Cardiac septum (tissue), 1 donor: ENCODE measurements at regions of chr12 and their contacts with region 1.

Region 1: GRCh38 chr12:54858562-54858961 is 4.2 kb downstream of the MUCL1 start:
- DNase-seq: no peak

Region 2: DNA sequence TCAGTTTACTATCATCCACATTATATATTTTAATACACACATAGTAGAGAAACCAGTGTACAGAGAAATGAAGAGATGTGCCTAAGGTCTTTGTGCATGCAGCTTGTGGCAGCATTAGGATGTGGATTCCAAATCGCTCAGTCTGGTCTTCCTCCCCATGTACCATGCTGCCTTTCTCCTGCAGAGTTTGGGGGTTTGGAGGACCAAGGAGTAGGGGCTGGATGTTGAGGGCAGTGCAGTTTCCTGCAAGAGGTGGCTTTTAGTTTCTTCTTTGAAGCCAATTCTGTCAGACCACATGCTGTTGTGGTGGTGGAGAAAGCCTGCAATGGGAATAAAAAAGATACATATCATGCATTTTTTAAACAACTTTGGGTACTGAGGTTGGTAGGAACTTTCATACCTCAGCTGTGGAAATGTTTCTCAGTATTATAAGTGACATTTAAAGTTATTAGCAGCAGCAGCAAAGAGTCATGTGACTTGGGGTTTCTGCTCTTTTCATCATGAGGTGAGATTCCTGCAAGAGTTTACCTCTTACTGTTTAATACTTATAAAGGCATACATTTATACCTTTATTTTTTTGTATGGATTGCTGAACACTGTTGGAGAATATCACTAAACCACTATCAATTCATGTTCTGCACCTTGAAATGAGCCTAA is 91.6 kb after region 1 on chr12:
- intact Hi-C with region 1: loop called (anchors 5 kb)
- DNase-seq: no peak